Naive thymus-derived CD4-positive, alpha-beta T cell (primary cell): ENCODE measurements at regions of chr2 and their contacts with region 1.

Region 1: GRCh38 chr2:108448678-108449493 is at the start of gene GCC2:
- DNase-seq: peak; percentile 92 to 98 (median 96)
- ATAC-seq: peak; percentile 98
- H3K4me3 ChIP-seq: peak within 1 kb of the TSS; percentile 99
- H3K4me3 Mint-ChIP-seq: peak within 1 kb of the TSS; percentile 93 to 100 (median 97)
- H3K27ac ChIP-seq: peak within 1 kb of the TSS; percentile 97
- H3K27ac Mint-ChIP-seq: peak within 1 kb of the TSS; percentile 97 to 100 (median 98)
- H3K4me1 ChIP-seq: peaks cover 15 to 23% of the 10 kb centered on the region in 2 donors
- H3K4me1 Mint-ChIP-seq: peaks cover 18 to 54% (median 47%) of the 10 kb centered on the region in 7 donors
- H3K27me3 ChIP-seq: no peaks in the 10 kb centered on the region
- H3K27me3 Mint-ChIP-seq: no peaks in the 10 kb centered on the region
- total RNA-seq, gene GCC2: 45.3 to 229 (median 117) TPM

Region 2: GRCh38 chr2:108477099-108477498 is 28.2 kb after region 1 on chr2:
- CTCF ChIA-PET with region 1: no interaction called
- POLR2A ChIA-PET with region 1: no interaction called
- intact Hi-C with region 1: loop called in 1 of 2 experiments (anchors 5 kb)
- DNase-seq: no peak
- ATAC-seq: no peak
- H3K4me3 ChIP-seq: no peak overlapping the region
- H3K4me3 Mint-ChIP-seq: no peak overlapping the region
- H3K27ac ChIP-seq: no peak overlapping the region
- H3K27ac Mint-ChIP-seq: peak overlapping the region in 2 of 9 donors; percentile 13 to 55
- H3K4me1 ChIP-seq: no peaks in the 10 kb centered on the region
- H3K4me1 Mint-ChIP-seq: peaks cover 0 to 11% (median 3%) of the 10 kb centered on the region in 7 donors
- H3K27me3 ChIP-seq: no peaks in the 10 kb centered on the region
- H3K27me3 Mint-ChIP-seq: no peaks in the 10 kb centered on the region

Region 3: GRCh38 chr2:108621087-108621559 is 172.2 kb after region 1 on chr2:
- CTCF ChIA-PET with region 1: no interaction called
- POLR2A ChIA-PET with region 1: no interaction called
- intact Hi-C with region 1: loop called in 1 of 2 experiments (anchors 5 kb)
- DNase-seq: peak; percentile 32 to 80 (median 75)
- ATAC-seq: peak; percentile 97
- H3K4me3 ChIP-seq: peak overlapping the region; percentile 59
- H3K4me3 Mint-ChIP-seq: peak overlapping the region; percentile 87 to 96 (median 91)
- H3K27ac ChIP-seq: peak overlapping the region; percentile 74
- H3K27ac Mint-ChIP-seq: peak overlapping the region; percentile 91 to 97 (median 94)
- H3K4me1 ChIP-seq: peaks cover 36 to 64% of the 10 kb centered on the region in 2 donors
- H3K4me1 Mint-ChIP-seq: peaks cover 44 to 93% (median 84%) of the 10 kb centered on the region in 7 donors
- H3K27me3 ChIP-seq: no peaks in the 10 kb centered on the region
- H3K27me3 Mint-ChIP-seq: no peaks in the 10 kb centered on the region

Region 4: DNA sequence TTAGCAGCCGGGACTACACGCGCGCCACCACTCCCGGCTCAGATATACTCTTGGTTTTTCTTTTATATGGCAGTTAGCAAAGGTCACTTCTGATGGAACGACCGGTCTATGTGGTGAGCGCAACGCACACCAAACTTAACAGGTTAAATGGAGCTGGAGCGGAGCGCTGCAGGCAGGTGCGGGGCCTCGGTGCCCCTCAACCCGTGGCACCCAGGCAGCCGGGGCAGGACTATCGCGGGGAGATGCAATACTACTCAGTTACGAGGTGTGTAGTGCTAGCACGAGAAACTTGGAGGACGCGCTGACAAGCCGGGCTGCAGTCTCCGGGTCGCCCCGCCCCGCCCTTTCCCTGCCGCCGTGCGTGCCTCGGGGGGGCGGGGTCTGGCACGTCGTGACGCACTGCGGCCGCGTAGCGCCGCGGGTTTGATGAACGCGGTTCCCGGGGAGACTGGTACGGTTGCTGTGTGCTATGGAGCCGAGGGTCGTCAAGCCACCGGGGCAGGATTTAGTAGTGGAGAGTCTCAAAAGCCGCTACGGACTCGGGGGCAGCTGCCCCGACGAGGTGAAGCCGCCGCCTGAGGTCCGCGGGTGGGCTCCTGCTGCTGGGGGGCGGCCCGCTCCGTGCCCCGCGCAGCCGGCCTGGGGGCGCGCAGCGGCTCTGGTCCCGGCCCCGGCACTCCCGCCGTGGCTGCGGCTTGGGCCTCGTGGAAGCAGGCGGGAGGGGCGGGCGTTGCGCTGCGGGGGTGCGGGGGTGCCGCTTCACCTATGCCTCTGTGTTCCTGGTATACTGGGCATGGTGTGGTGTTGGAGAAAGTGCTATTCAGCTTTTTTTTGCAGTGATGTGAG is 337.7 kb after region 1 on chr2 and contains the start of gene CCDC138:
- CTCF ChIA-PET with region 1: no interaction called
- POLR2A ChIA-PET with region 1: no interaction called
- intact Hi-C with region 1: loop called (anchors 2 to 5 kb)
- DNase-seq: peak; percentile 86 to 93 (median 91)
- ATAC-seq: peak; percentile 98
- H3K4me3 ChIP-seq: peak within 1 kb of the TSS; percentile 88
- H3K4me3 Mint-ChIP-seq: peak within 1 kb of the TSS; percentile 88 to 100 (median 97)
- H3K27ac ChIP-seq: peak within 1 kb of the TSS; percentile 90
- H3K27ac Mint-ChIP-seq: peak within 1 kb of the TSS; percentile 69 to 99 (median 97)
- H3K4me1 ChIP-seq: peaks cover 6 to 13% of the 10 kb centered on the region in 2 donors
- H3K4me1 Mint-ChIP-seq: peaks cover 6 to 21% (median 17%) of the 10 kb centered on the region in 7 donors
- H3K27me3 ChIP-seq: no peaks in the 10 kb centered on the region
- H3K27me3 Mint-ChIP-seq: no peaks in the 10 kb centered on the region
- total RNA-seq, gene CCDC138: 2.7 to 10.5 (median 7.5) TPM